ENCODE measurements at regions of chr13 and their contacts with region 1.

Region 1: DNA sequence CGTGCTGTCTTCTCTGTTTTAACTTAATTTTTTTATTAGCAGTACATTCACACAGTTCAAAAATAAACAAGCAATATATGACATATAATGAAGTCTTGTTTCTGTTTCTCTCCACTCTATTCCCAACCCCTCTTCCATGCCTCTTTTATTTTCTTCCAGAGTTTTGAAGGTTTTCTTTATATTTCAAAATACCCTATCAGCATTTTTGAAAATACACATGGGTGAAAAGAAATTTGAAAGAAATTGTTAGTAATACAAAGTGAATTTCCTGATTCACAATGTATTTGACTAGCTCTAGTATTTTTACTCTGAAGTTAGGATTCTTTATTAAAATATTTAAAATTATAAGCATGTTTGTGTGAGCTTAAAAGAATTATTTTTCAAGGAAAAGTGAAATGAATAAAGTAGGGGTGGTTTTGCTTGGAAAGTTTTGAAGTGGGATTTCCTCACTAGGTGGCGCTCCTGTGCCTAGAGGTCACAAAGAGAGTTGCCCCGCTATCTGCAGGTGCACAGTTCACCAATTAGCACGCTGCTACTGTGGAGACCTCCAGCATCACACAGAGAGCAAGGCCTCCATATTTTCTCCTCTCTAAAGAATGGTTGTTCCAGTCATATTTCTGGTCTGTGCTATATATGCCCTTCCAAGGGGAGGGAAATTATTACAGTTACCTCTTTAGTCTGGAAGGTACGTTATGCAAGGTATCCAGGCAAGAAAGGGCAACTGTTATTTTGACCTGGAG is 37.6 kb downstream of the SOX21 start:
- DNase-seq: peak; percentile 65 to 75
- H3K4me3 ChIP-seq: no peak overlapping the region
- H3K4me3 Mint-ChIP-seq: no peak overlapping the region
- H3K27ac Mint-ChIP-seq: no peak overlapping the region
- H3K4me1 ChIP-seq: no peaks in the 10 kb centered on the region
- H3K4me1 Mint-ChIP-seq: no peaks in the 10 kb centered on the region
- H3K27me3 ChIP-seq: no peaks in the 10 kb centered on the region
- H3K27me3 Mint-ChIP-seq: peaks cover 17% of the 10 kb centered on the region
- CTCF ChIP-seq: peak; percentile 76 to 90

Region 2: GRCh38 chr13:94534166-94534565 is 140.6 kb before region 1 on chr13:
- CTCF ChIA-PET with region 1: no interaction called
- POLR2A ChIA-PET with region 1: no interaction called
- intact Hi-C with region 1: no loop called
- DNase-seq: no peak
- H3K4me3 ChIP-seq: no peak overlapping the region
- H3K4me3 Mint-ChIP-seq: no peak overlapping the region
- H3K27ac Mint-ChIP-seq: no peak overlapping the region
- H3K4me1 ChIP-seq: no peaks in the 10 kb centered on the region
- H3K4me1 Mint-ChIP-seq: no peaks in the 10 kb centered on the region
- H3K27me3 ChIP-seq: no peaks in the 10 kb centered on the region; the same call in 1 of the 2 replicates
- H3K27me3 Mint-ChIP-seq: peaks cover 15% of the 10 kb centered on the region
- CTCF ChIP-seq: no peak

Region 3: GRCh38 chr13:94950303-94950702 is 275.5 kb after region 1 on chr13:
- CTCF ChIA-PET with region 1: no interaction called
- POLR2A ChIA-PET with region 1: no interaction called
- intact Hi-C with region 1: loop called (anchors 2 kb)
- DNase-seq: peak in 1 of 2 experiments; percentile 22
- H3K4me3 ChIP-seq: no peak overlapping the region
- H3K4me3 Mint-ChIP-seq: no peak overlapping the region
- H3K27ac Mint-ChIP-seq: no peak overlapping the region
- H3K4me1 ChIP-seq: 0 out of 2 replicates have a peak, but pooled peaks cover 3% of the 10 kb centered on the region
- H3K4me1 Mint-ChIP-seq: no peaks in the 10 kb centered on the region
- H3K27me3 ChIP-seq: no peaks in the 10 kb centered on the region; the same call in 1 of the 2 replicates
- H3K27me3 Mint-ChIP-seq: peaks cover 19% of the 10 kb centered on the region
- CTCF ChIP-seq: peak in 1 of 2 experiments; percentile 53

Region 4: GRCh38 chr13:95156208-95156607 is 481.4 kb after region 1 on chr13:
- CTCF ChIA-PET with region 1: no interaction called
- POLR2A ChIA-PET with region 1: no interaction called
- intact Hi-C with region 1: loop called (anchors 1 kb)
- DNase-seq: no peak
- H3K4me3 ChIP-seq: no peak overlapping the region
- H3K4me3 Mint-ChIP-seq: no peak overlapping the region
- H3K27ac Mint-ChIP-seq: no peak overlapping the region
- H3K4me1 ChIP-seq: 0 out of 2 replicates have a peak, but pooled peaks cover 4% of the 10 kb centered on the region
- H3K4me1 Mint-ChIP-seq: no peaks in the 10 kb centered on the region
- H3K27me3 ChIP-seq: no peaks in the 10 kb centered on the region
- H3K27me3 Mint-ChIP-seq: no peaks in the 10 kb centered on the region
- CTCF ChIP-seq: peak; percentile 18 to 35

Region 5: GRCh38 chr13:95480131-95480545 is 805.4 kb after region 1 on chr13:
- CTCF ChIA-PET with region 1: no interaction called
- POLR2A ChIA-PET with region 1: no interaction called
- intact Hi-C with region 1: loop called (anchors 1 kb)
- DNase-seq: no peak
- H3K4me3 ChIP-seq: no peak overlapping the region
- H3K4me3 Mint-ChIP-seq: no peak overlapping the region
- H3K27ac Mint-ChIP-seq: no peak overlapping the region
- H3K4me1 ChIP-seq: no peaks in the 10 kb centered on the region
- H3K4me1 Mint-ChIP-seq: no peaks in the 10 kb centered on the region
- H3K27me3 ChIP-seq: no peaks in the 10 kb centered on the region; the same call in 1 of the 2 replicates
- H3K27me3 Mint-ChIP-seq: peaks cover 10% of the 10 kb centered on the region
- CTCF ChIP-seq: no peak

Measured in Caco-2 (cell line).